ENCODE measurements at regions of chr11 and their contacts with region 1.

Region 1: GRCh38 chr11:65569973-65570918 is at the start of gene ZNRD2:
- DNase-seq: peak; percentile 99
- ATAC-seq: peak; percentile 70
- H3K4me3 Mint-ChIP-seq: peak within 1 kb of the TSS; percentile 100
- H3K27ac Mint-ChIP-seq: peak within 1 kb of the TSS; percentile 99
- H3K4me1 Mint-ChIP-seq: peaks cover 71% of the 10 kb centered on the region
- H3K27me3 Mint-ChIP-seq: no peaks in the 10 kb centered on the region
- total RNA-seq, gene ZNRD2: 39.2 to 40.7 TPM

Region 2: GRCh38 chr11:65551572-65552398 is 18.5 kb before region 1 on chr11:
- CTCF ChIA-PET with region 1: interaction called, 20 read pairs
- POLR2A ChIA-PET with region 1: interaction called, 11 read pairs
- DNase-seq: peak; percentile 77
- ATAC-seq: peak; percentile 44
- H3K4me3 Mint-ChIP-seq: peak overlapping the region; percentile 13
- H3K27ac Mint-ChIP-seq: peak overlapping the region; percentile 78
- H3K4me1 Mint-ChIP-seq: peaks cover 77% of the 10 kb centered on the region
- H3K27me3 Mint-ChIP-seq: no peaks in the 10 kb centered on the region

Region 3: DNA sequence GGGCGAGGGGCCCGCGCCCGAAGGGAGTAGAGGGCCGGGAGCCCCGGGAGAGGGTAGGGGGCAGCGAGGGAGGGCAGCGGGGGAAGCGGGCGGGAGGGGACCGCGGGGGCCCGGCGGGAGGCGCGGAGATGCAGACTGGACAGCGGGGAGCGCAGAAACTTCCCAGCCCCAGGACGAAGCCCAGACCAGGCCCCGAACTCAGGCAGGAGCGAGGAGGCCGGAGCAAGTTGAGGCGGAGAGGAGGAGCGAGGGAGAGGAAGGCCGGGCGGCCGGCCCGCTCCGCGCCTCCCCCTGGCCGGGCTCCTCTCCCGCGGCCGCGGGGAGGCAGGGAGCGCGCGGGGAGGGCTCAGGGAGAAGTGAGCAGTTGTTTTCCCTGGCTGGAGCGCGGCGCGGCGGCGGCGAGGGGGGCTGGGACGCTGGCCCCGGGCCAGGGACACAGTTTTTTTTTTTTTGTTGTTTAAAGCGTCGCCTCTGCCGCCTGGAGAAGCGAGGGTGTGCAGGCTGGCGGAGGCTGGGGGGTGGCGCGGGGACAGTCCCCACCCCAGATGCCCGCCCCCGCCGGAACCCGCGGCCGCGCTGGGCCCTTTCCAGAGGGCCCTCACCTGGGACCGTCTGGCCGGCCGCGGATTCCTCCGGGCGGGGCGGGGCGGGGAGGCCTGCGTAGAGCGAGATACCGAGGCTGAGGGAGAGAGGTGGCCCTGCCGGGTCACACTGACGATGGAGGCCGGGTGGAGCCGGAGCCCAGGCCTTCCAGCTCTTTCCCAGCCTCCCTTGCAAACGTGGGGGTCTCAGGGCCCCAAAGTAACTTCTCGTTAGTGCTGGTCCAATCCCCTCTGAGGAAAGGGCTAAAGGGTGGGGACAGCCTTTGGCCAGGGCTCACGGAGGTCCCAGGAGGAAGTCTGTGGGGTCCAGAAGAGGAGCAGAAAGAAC is 12.0 kb before region 1 on chr11 and contains the start of gene LTBP3:
- CTCF ChIA-PET with region 1: interaction called, 20 read pairs
- POLR2A ChIA-PET with region 1: interaction called, 13 read pairs
- DNase-seq: no peak
- ATAC-seq: peak; percentile 52
- H3K4me3 Mint-ChIP-seq: peak within 1 kb of the TSS; percentile 82
- H3K27ac Mint-ChIP-seq: peak within 1 kb of the TSS; percentile 78
- H3K4me1 Mint-ChIP-seq: peaks cover 58% of the 10 kb centered on the region
- H3K27me3 Mint-ChIP-seq: no peaks in the 10 kb centered on the region
- total RNA-seq, gene LTBP3: 64.7 to 70.8 TPM

Region 4: GRCh38 chr11:65588199-65589054 is 18.2 kb after region 1 on chr11:
- CTCF ChIA-PET with region 1: interaction called, 88 read pairs
- POLR2A ChIA-PET with region 1: interaction called, 8 read pairs
- DNase-seq: peak; percentile 86
- ATAC-seq: peak; percentile 89
- H3K4me3 Mint-ChIP-seq: peak overlapping the region; percentile 55
- H3K27ac Mint-ChIP-seq: peak overlapping the region; percentile 94
- H3K4me1 Mint-ChIP-seq: peaks cover 48% of the 10 kb centered on the region
- H3K27me3 Mint-ChIP-seq: no peaks in the 10 kb centered on the region

Region 5: GRCh38 chr11:65593518-65594298 is 23.5 kb after region 1 on chr11:
- CTCF ChIA-PET with region 1: interaction called, 88 read pairs
- POLR2A ChIA-PET with region 1: interaction called, 8 read pairs
- DNase-seq: peak; percentile 64
- ATAC-seq: peak; percentile 73
- H3K4me3 Mint-ChIP-seq: no peak overlapping the region
- H3K27ac Mint-ChIP-seq: peak overlapping the region; percentile 63
- H3K4me1 Mint-ChIP-seq: peaks cover 18% of the 10 kb centered on the region
- H3K27me3 Mint-ChIP-seq: no peaks in the 10 kb centered on the region

Region 6: GRCh38 chr11:65695456-65696241 is 125.4 kb after region 1 on chr11:
- CTCF ChIA-PET with region 1: no interaction called
- POLR2A ChIA-PET with region 1: no interaction called
- DNase-seq: no peak
- ATAC-seq: no peak
- H3K4me3 Mint-ChIP-seq: no peak overlapping the region
- H3K27ac Mint-ChIP-seq: no peak overlapping the region
- H3K4me1 Mint-ChIP-seq: peaks cover 4% of the 10 kb centered on the region
- H3K27me3 Mint-ChIP-seq: peaks cover 18% of the 10 kb centered on the region

Region 7: DNA sequence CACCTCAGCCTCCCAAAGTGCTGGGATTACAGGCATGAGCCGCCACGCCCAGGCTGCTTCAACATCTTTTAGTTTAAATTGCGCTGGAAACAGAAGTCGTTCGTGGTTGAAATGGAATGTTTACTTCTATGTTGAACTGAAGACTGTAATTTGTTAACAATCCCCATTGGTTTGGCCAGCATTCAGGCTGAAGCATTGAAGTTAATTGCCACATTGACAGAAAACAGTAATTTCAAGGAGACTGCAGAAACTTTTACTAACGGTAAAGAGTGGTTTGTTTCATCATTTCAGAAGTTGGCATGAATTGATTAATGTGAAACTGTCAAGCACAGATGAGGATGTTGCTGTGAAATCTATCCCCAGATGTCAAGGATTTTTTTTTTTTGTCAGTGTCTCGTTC is 196.3 kb after region 1 on chr11:
- CTCF ChIA-PET with region 1: no interaction called
- POLR2A ChIA-PET with region 1: no interaction called
- DNase-seq: peak; percentile 9
- ATAC-seq: no peak
- H3K4me3 Mint-ChIP-seq: no peak overlapping the region
- H3K27ac Mint-ChIP-seq: no peak overlapping the region
- H3K4me1 Mint-ChIP-seq: peaks cover 6% of the 10 kb centered on the region
- H3K27me3 Mint-ChIP-seq: peaks cover 1% of the 10 kb centered on the region

Region 8: DNA sequence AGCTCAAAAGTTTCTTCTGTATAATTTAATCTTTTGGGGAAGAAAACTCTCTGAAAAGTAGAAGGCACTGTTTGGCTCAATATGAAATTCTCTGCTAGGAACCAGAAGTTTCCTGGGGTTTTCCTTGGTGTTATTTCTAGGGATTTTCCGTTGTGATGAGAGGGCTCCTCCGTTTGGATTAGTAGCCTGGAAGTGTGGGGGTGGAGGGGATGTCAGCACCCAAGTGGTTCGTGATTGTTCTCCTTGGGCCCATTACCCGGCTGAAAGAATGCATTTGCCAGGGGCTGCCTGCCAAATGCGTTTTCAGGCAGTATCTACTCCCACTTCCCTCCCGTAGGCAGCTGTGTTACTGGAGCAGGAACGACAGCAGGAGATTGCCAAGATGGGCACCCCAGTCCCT is 486.3 kb after region 1 on chr11:
- CTCF ChIA-PET with region 1: no interaction called
- POLR2A ChIA-PET with region 1: no interaction called
- DNase-seq: no peak
- ATAC-seq: no peak
- H3K4me3 Mint-ChIP-seq: no peak overlapping the region
- H3K27ac Mint-ChIP-seq: no peak overlapping the region
- H3K4me1 Mint-ChIP-seq: peaks cover 22% of the 10 kb centered on the region
- H3K27me3 Mint-ChIP-seq: no peaks in the 10 kb centered on the region

Measured in activated CD8-positive, alpha-beta T cell treated with anti-CD3 and anti-CD28 coated beads, Interleukin-2, amount 10 ng/mL, durations not matched to agents 7 days and 5 days (primary cell).